ENCODE measurements at regions of chr19 and their contacts with region 1.

Region 1: DNA sequence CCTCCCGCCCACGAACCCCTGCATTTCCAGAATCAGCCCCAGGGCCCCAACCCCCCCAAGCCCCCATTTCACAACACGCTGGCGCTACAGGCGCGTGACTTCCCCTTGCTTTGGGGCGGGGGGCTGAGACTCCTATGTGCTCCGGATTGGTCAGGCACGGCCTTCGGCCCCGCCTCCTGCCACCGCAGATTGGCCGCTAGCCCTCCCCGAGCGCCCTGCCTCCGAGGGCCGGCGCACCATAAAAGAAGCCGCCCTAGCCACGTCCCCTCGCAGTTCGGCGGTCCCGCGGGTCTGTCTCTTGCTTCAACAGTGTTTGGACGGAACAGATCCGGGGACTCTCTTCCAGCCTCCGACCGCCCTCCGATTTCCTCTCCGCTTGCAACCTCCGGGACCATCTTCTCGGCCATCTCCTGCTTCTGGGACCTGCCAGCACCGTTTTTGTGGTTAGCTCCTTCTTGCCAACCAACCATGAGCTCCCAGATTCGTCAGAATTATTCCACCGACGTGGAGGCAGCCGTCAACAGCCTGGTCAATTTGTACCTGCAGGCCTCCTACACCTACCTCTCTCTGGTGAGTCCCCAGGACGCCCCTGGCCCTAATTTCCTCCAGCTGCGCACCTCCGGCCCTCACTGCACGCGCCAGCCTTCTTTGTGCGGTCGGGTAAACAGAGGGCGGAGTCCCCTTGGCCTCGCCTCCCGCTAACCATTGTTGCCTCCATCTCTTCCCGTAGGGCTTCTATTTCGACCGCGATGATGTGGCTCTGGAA is at the start of gene FTL:
- DNase-seq: peak; percentile 89 to 99 (median 94)
- ATAC-seq: peak; percentile 72
- H3K4me3 ChIP-seq: peak within 1 kb of the TSS; percentile 70
- H3K27ac ChIP-seq: peak within 1 kb of the TSS; percentile 99
- H3K4me1 ChIP-seq: peaks cover 38 to 66% of the 10 kb centered on the region in 2 experiments
- H3K27me3 ChIP-seq: no peaks in the 10 kb centered on the region
- CTCF ChIP-seq: no peak
- EP300 ChIP-seq: peak; percentile 36; the same call in 1 of the 2 replicates
- POLR2A ChIP-seq: peak; percentile 100
- RAD21 ChIP-seq: peak in 1 of 2 experiments; percentile 21; a peak in 2 of 4 replicates
- polyA plus RNA-seq, gene FTL: 17,458 to 27,415 TPM

Region 2: GRCh38 chr19:48842789-48843162 is 122.4 kb before region 1 on chr19:
- CTCF ChIA-PET with region 1: no interaction called
- POLR2A ChIA-PET with region 1: interaction called, 16 read pairs
- in situ Hi-C with region 1: no loop called
- intact Hi-C with region 1: no loop called
- DNase-seq: peak; percentile 53 to 80 (median 64)
- ATAC-seq: peak; percentile 87
- H3K4me3 ChIP-seq: no peak overlapping the region
- H3K27ac ChIP-seq: no peak overlapping the region
- H3K4me1 ChIP-seq: peaks cover 6 to 11% of the 10 kb centered on the region in 2 experiments; a peak in 4 of 5 replicates
- H3K27me3 ChIP-seq: no peaks in the 10 kb centered on the region
- CTCF ChIP-seq: peak; percentile 73 to 90 (median 79)
- EP300 ChIP-seq: no peak
- POLR2A ChIP-seq: no peak
- RAD21 ChIP-seq: peak; percentile 64 to 78

Region 3: DNA sequence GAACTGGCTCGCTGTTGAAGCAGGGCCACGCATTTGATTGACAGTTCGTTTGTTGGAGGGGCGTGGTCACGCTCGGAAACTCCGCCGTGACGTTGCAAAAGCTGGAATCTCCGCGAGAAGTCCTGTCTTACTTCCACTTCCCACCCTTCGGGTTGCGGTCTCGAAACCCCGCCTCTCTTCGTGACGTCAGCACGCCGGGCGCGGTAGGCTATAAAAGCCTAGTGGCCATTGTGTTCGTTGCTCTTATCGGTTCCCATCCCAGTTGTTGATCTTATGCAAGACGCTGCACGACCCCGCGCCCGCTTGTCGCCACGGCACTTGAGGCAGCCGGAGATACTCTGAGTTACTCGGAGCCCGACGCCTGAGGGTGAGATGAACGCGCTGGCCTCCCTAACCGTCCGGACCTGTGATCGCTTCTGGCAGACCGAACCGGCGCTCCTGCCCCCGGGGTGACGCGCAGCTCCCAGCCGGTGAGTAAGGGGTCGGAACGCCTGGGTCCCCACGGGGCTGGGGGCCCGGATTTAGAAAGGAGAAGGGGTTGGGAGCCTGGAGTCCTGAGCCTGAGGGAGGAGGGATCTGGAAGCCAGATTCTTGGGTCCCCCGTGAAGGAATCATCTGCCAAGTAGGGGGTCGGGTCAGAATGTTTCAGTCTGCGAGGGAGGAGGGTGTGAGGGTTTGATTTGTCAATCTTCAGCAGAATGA is 92.9 kb before region 1 on chr19 and contains the start of gene PPP1R15A:
- CTCF ChIA-PET with region 1: interaction called, 3 read pairs
- POLR2A ChIA-PET with region 1: interaction called, 439 read pairs
- in situ Hi-C with region 1: loop called (anchors 10 kb)
- intact Hi-C with region 1: loop called (anchors 1 kb)
- DNase-seq: peak; percentile 90 to 99 (median 93)
- ATAC-seq: peak; percentile 52
- H3K4me3 ChIP-seq: peak within 1 kb of the TSS; percentile 87
- H3K27ac ChIP-seq: peak within 1 kb of the TSS; percentile 94
- H3K4me1 ChIP-seq: peaks cover 23 to 42% of the 10 kb centered on the region in 2 experiments
- H3K27me3 ChIP-seq: no peaks in the 10 kb centered on the region
- CTCF ChIP-seq: no peak
- EP300 ChIP-seq: peak; percentile 77; the same call in 1 of the 2 replicates
- POLR2A ChIP-seq: peak; percentile 100
- RAD21 ChIP-seq: peak; percentile 27 to 41
- polyA plus RNA-seq, gene PPP1R15A: 0.42 to 1.3 TPM

Region 4: GRCh38 chr19:48926909-48927308 is 38.3 kb before region 1 on chr19:
- CTCF ChIA-PET with region 1: no interaction called
- POLR2A ChIA-PET with region 1: interaction called, 32 read pairs
- in situ Hi-C with region 1: no loop called
- intact Hi-C with region 1: loop called (anchors 5 kb)
- DNase-seq: peak; percentile 47 to 85 (median 58)
- ATAC-seq: peak; percentile 72
- H3K4me3 ChIP-seq: no peak overlapping the region
- H3K27ac ChIP-seq: peak overlapping the region; percentile 75; the same call in 2 of the 3 replicates
- H3K4me1 ChIP-seq: peaks cover 6 to 10% of the 10 kb centered on the region in 2 experiments; a peak in 3 of 5 replicates
- H3K27me3 ChIP-seq: no peaks in the 10 kb centered on the region
- CTCF ChIP-seq: no peak
- EP300 ChIP-seq: no peak
- POLR2A ChIP-seq: peak; percentile 32; the same call in 1 of the 2 replicates
- RAD21 ChIP-seq: peak in 1 of 2 experiments; percentile 9; a peak in 1 of 4 replicates

Region 5: DNA sequence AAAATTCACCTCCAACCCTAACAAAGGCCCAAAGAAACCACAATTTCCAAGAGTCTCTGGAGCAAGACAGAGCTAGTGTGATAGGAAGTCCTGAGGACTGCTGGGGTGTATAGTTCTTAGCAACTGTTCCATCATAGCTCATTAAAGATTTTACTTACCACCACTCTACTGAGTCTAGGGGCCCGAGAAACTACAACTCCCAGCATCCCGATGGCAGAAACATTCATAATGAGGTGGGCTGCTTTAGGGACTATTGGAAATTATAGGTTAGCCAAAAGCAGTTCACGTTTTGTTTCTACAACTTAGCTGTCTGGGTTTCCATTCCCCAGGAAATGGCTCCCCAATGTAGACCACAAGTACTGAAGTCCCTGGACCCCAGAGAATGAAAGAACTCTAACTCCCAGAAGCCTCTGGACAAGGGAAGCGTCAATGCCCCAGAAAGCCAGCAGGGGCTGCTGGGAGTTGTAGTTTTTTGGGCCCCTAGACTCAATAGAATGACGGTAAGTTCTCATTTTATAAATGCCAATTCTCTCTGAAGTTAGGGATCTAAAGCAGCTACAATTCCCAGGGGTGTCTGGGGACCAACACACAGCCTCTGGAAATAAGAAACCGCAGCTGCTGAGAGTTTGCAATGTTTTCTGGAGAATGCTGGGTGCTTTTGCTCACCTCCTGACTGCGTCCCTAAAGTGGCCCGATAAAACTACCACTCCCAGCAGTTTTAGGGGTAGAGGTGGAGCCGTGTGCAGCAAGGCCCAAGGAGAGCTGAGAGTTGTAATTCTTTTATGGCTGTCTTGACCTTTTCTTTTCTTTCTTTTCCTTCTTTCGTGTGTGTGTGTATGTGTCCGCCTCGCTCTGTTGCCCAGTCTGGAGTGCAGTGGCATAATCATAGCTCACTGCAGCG is 11.0 kb after region 1 on chr19:
- CTCF ChIA-PET with region 1: interaction called, 6 read pairs
- POLR2A ChIA-PET with region 1: interaction called, 64 read pairs
- in situ Hi-C with region 1: no loop called
- intact Hi-C with region 1: no loop called
- DNase-seq: peak; percentile 53 to 76 (median 60)
- ATAC-seq: peak; percentile 95
- H3K4me3 ChIP-seq: no peak overlapping the region
- H3K27ac ChIP-seq: peak overlapping the region; percentile 65
- H3K4me1 ChIP-seq: peaks cover 3 to 4% of the 10 kb centered on the region in 2 experiments; a peak in 2 of 5 replicates
- H3K27me3 ChIP-seq: no peaks in the 10 kb centered on the region
- CTCF ChIP-seq: no peak
- EP300 ChIP-seq: no peak
- POLR2A ChIP-seq: no peak
- RAD21 ChIP-seq: no peak

Region 6: GRCh38 chr19:49084206-49085019 is 119.2 kb after region 1 on chr19:
- CTCF ChIA-PET with region 1: no interaction called
- POLR2A ChIA-PET with region 1: no interaction called
- in situ Hi-C with region 1: no loop called
- intact Hi-C with region 1: no loop called
- DNase-seq: peak in 1 of 4 experiments; percentile 61
- ATAC-seq: peak; percentile 23
- H3K4me3 ChIP-seq: peak overlapping the region; percentile 77
- H3K27ac ChIP-seq: peak overlapping the region; percentile 94
- H3K4me1 ChIP-seq: peaks cover 13 to 43% of the 10 kb centered on the region in 2 experiments; a peak in 4 of 5 replicates
- H3K27me3 ChIP-seq: no peaks in the 10 kb centered on the region
- CTCF ChIP-seq: no peak
- EP300 ChIP-seq: no peak
- POLR2A ChIP-seq: no peak
- RAD21 ChIP-seq: no peak

Measured in K562 (cell line).